Activated CD8-positive, alpha-beta T cell treated with anti-CD3 and anti-CD28 coated beads, Interleukin-2, amount 10 ng/mL, durations not matched to agents 7 days and 5 days (primary cell): ENCODE measurements at regions of chr6 and their contacts with region 1.

Region 1: DNA sequence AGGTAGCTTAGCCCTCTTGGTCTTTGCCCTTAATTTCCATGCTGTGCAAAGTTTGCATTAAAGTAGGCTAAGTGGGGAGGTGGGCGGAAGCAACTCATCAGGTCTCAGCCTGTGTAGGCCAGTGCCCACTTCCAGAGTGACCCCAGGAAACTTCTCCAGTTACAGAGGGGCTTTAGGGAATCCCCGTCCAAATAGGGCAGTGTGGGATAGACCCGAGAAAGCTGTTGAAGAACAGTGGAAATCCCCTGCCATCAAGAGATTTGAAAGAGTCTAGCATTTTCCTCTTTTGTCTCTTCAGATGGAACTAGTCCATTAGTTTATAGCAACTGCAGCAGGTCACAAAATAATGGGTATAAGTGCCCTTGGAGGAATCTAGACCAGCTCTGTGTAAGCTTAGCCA is 20.2 kb downstream of the SF3B5 start:
- DNase-seq: no peak
- ATAC-seq: no peak
- H3K4me3 Mint-ChIP-seq: no peak overlapping the region
- H3K27ac Mint-ChIP-seq: no peak overlapping the region
- H3K4me1 Mint-ChIP-seq: peaks cover 2% of the 10 kb centered on the region
- H3K27me3 Mint-ChIP-seq: peaks cover 15% of the 10 kb centered on the region

Region 2: GRCh38 chr6:144063744-144064401 is 11.3 kb before region 1 on chr6:
- CTCF ChIA-PET with region 1: interaction called, 12 read pairs
- POLR2A ChIA-PET with region 1: interaction called, 6 read pairs
- DNase-seq: peak; percentile 94
- ATAC-seq: peak; percentile 96
- H3K4me3 Mint-ChIP-seq: peak overlapping the region; percentile 88
- H3K27ac Mint-ChIP-seq: peak overlapping the region; percentile 94
- H3K4me1 Mint-ChIP-seq: peaks cover 46% of the 10 kb centered on the region
- H3K27me3 Mint-ChIP-seq: peaks cover 3% of the 10 kb centered on the region